ENCODE measurements at regions of chr14 and their contacts with region 1.

Region 1: GRCh38 chr14:52949711-52950409 is 990 bp downstream of the FERMT2 start:
- DNase-seq: peak; percentile 45 to 67
- H3K4me3 ChIP-seq: peak overlapping the region; percentile 85 to 90
- H3K27ac ChIP-seq: peak overlapping the region; percentile 98 to 99
- H3K4me1 ChIP-seq: peaks cover 0 to 73% (median 22%) of the 10 kb centered on the region in 4 donors
- H3K27me3 ChIP-seq: no peaks in the 10 kb centered on the region
- CTCF ChIP-seq: peak in 1 of 2 experiments; percentile 14

Region 2: GRCh38 chr14:52879958-52880357 is 69.9 kb before region 1 on chr14:
- intact Hi-C with region 1: loop called (anchors 10 kb)
- DNase-seq: no peak
- H3K4me3 ChIP-seq: no peak overlapping the region
- H3K27ac ChIP-seq: peak overlapping the region; percentile 62 to 70
- H3K4me1 ChIP-seq: peaks cover 0 to 97% (median 43%) of the 10 kb centered on the region in 4 donors
- H3K27me3 ChIP-seq: no peaks in the 10 kb centered on the region
- CTCF ChIP-seq: no peak

Region 3: DNA sequence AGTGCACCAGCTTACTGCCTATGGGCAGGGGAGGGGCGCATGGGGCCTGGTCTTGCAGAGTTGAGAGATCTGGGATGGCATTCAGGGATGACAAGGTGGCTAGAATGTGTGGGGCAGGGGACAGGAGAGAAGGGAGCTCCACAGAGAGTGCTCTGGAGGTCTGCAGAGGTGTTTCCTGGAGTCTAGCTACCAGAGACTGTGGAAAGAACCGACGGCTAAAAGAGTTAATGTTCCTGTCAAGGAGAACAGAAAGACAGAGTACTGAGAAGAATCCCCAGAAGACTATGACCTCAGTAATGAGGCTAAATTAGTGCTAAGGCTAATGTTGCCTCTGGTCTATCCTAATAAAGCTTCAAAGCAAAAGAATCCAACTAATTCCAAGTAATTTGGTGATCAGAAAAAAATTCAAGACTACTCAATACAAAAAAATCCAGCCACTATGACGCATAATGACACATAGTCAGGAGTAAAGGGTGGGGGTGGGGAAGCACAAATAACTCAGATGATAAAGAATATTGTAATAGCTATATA is 43.7 kb before region 1 on chr14:
- intact Hi-C with region 1: loop called (anchors 5 kb)
- DNase-seq: no peak
- H3K4me3 ChIP-seq: peak overlapping the region in 1 of 2 donors; percentile 0
- H3K27ac ChIP-seq: peak overlapping the region; percentile 60 to 73
- H3K4me1 ChIP-seq: peaks cover 0 to 97% (median 34%) of the 10 kb centered on the region in 4 donors
- H3K27me3 ChIP-seq: no peaks in the 10 kb centered on the region
- CTCF ChIP-seq: no peak

Region 4: DNA sequence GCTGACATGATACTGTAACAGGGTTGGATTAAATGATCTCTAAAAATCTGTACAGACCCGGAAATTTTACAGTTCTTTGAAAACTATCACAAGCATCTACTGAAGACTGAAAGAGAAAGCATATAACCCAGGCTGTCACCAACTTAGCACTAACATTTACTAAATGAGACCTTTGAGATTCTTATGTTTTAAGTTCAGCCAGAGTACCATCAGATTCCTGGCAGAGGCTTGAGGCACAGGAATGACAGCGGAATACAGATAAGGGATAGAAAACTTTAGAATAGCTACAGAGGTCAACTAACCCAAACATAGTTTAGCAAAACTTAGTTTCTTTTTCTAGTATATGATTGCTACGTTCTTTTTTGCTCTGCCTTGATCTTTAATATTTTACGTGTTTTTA is 92.6 kb after region 1 on chr14:
- intact Hi-C with region 1: no loop called
- DNase-seq: no peak
- H3K4me3 ChIP-seq: peak overlapping the region in 1 of 2 donors; percentile 8
- H3K27ac ChIP-seq: peak overlapping the region; percentile 43 to 62
- H3K4me1 ChIP-seq: peaks cover 0 to 27% (median 8%) of the 10 kb centered on the region in 4 donors
- H3K27me3 ChIP-seq: no peaks in the 10 kb centered on the region
- CTCF ChIP-seq: no peak

Region 5: DNA sequence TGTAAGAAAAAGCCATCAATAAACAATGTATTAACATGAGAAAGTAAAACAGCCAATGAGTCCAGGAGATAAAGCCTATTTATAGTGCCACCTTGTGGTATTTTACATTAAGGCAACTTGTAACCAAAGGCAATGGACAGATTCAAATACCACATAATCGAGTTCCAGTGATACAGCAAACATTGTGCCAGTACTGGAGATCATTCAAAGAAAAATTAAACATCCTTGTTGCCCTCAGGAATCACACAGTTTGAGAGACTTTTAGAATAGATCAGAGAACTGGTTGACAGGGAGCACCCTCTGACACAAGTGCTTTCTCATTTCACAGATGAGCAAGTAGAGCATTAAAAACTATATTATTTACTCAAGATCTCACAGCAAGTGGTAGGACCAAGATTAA is 105.1 kb after region 1 on chr14:
- intact Hi-C with region 1: no loop called
- DNase-seq: no peak
- H3K4me3 ChIP-seq: no peak overlapping the region
- H3K27ac ChIP-seq: no peak overlapping the region
- H3K4me1 ChIP-seq: peaks cover 0 to 11% (median 0%) of the 10 kb centered on the region in 4 donors
- H3K27me3 ChIP-seq: no peaks in the 10 kb centered on the region
- CTCF ChIP-seq: peak; percentile 50 to 68

Region 6: DNA sequence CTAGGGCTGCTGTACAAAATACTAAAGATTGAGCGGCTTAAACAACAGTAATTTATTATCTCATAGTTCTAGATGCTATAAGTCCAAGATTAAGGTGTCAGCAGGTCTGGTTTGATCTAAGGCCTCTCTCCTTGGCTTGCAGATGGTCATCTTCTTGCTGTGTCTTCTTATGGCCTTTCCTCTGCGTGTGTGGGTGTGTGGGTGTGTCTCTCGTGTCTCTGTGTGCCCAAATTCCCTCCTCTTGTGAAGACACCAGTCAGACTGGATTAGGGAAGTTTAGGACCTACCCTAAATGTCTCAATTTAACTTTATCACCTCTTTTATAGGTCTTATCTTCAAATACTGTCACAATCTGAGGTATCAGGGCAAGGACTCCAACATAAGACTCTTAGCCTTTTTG is 174.9 kb after region 1 on chr14:
- intact Hi-C with region 1: no loop called
- DNase-seq: no peak
- H3K4me3 ChIP-seq: no peak overlapping the region
- H3K27ac ChIP-seq: no peak overlapping the region
- H3K4me1 ChIP-seq: peaks cover 0 to 6% (median 2%) of the 10 kb centered on the region in 4 donors
- H3K27me3 ChIP-seq: no peaks in the 10 kb centered on the region
- CTCF ChIP-seq: no peak

Measured in tibial artery (tissue), 4 donors.